Mucosa of descending colon (tissue), 3 donors: ENCODE measurements at regions of chr1 and their contacts with region 1.

Region 1: GRCh38 chr1:235415008-235415904 is 48.0 kb downstream of the TBCE start:
- DNase-seq: peak; percentile 57 to 76 (median 61)
- ATAC-seq: peak; percentile 92
- H3K4me3 ChIP-seq: no peak overlapping the region
- H3K4me1 ChIP-seq: peaks cover 11% of the 10 kb centered on the region
- CTCF ChIP-seq: peak; percentile 36

Region 2: GRCh38 chr1:235105051-235106043 is 309.9 kb before region 1 on chr1:
- intact Hi-C with region 1: loop called in 1 of 2 experiments (anchors 10 kb)
- DNase-seq: no peak
- ATAC-seq: peak; percentile 6
- H3K4me3 ChIP-seq: no peak overlapping the region
- H3K4me1 ChIP-seq: peaks cover 3% of the 10 kb centered on the region
- CTCF ChIP-seq: no peak

Region 3: GRCh38 chr1:235253219-235253962 is 161.9 kb before region 1 on chr1:
- intact Hi-C with region 1: loop called (anchors 5 kb)
- DNase-seq: peak in 2 of 3 donors; percentile 47 to 73
- ATAC-seq: peak; percentile 92
- H3K4me3 ChIP-seq: no peak overlapping the region
- H3K4me1 ChIP-seq: peaks cover 5% of the 10 kb centered on the region
- CTCF ChIP-seq: peak; percentile 68

Region 4: GRCh38 chr1:235259133-235259778 is 156.0 kb before region 1 on chr1:
- intact Hi-C with region 1: loop called (anchors 5 kb)
- DNase-seq: no peak
- ATAC-seq: peak; percentile 80
- H3K4me3 ChIP-seq: no peak overlapping the region
- H3K4me1 ChIP-seq: peaks cover 8% of the 10 kb centered on the region
- CTCF ChIP-seq: no peak